Motor neuron (in vitro differentiated cells): ENCODE measurements at regions of chr2 and their contacts with region 1.

Region 1: GRCh38 chr2:73176881-73177644 is 25.3 kb upstream of the NOTO start:
- ATAC-seq: peak; percentile 60 to 95 (median 91)
- H3K4me3 ChIP-seq: peak overlapping the region; percentile 32 to 39 (median 34)
- H3K27ac ChIP-seq: no peak overlapping the region
- H3K4me1 ChIP-seq: peaks cover 3% of the 10 kb centered on the region in 2 donors

Region 2: DNA sequence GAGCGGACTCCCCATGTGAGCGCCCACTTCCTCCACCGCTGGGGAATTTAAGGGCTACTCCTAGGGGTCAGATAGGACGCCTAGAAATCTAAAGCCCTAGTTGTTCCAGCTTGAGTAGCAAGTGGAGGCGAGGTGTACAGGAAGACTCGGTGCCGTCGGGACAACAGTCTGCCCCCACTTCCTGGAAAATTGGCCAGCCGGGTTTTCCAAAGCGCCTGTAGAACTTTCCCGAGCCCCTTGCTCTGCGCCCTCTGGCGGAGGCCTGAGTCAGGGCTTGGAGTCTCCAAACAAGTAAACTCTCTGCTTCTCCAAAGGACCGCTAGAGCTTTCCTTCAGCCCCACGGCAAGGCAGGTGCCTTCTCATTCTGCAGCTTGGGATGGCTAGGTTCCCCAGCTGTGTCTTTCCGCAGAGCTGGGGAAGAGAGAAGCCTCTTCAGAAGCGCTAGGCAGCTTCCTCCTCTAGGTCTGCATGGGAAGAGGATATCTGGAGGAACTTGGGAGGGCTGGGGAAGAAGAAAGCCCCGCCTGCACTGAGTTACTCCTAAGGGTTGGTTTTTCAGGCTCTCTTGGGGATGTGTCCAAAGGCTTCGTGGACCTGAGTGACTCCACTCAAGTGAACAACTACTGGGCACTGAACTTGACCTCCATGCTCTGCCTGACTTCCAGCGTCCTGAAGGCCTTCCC is 289.2 kb before region 1 on chr2:
- in situ Hi-C with region 1: loop called in 7 of 9 experiments (anchors 10 to 25 kb)
- ATAC-seq: peak; percentile 51 to 77 (median 72)
- H3K4me3 ChIP-seq: peak overlapping the region; percentile 32 to 45 (median 39)
- H3K27ac ChIP-seq: no peak overlapping the region
- H3K4me1 ChIP-seq: peaks cover 0 to 4% of the 10 kb centered on the region in 2 donors

Region 3: DNA sequence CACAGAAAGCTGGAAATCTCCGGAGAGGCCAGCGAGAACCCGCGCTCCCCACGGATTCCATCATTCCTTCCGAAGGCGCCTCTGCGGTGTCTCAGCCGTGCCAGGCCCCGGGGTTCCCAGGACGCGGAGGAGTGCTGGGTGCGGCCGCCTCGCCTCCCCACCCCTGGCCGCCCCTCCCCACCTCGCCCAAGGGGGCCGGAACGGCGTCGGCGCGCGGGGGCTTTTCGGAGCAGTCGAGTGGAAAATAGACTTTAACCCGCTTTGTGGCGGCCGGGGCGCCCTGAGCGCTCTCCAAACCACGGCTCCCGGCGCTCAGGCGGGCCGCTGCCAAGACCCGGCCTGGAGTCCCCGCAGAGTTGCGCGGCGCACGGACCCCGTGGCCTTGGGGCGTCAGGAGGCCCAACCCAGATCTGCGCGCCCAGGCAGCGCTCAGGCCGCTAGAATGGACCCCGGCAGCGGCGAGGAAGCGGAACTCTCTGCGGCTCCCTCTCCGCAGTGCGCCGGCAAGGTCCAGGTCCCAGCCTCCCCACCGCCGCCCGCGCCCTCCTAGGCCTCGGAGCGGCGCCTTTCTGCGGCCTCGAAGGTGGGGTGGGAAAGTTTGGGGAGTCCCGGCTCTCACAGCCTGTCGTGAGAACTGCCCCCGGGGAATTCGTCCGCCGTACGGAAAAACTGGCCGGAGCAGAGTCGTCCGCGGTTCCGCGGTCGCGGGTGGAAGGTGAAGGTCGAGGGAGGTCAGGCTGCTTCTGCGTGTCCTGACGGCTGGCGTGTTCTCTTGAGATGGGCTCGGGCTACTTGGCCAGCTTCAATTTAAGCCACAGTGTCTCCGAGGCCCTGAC is 260.9 kb before region 1 on chr2:
- in situ Hi-C with region 1: loop called in 1 of 9 experiments (anchors 25 kb)
- ATAC-seq: peak; percentile 22 to 68 (median 40)
- H3K4me3 ChIP-seq: peak overlapping the region in 4 of 5 donors; percentile 14 to 28 (median 20)
- H3K27ac ChIP-seq: no peak overlapping the region
- H3K4me1 ChIP-seq: peaks cover 12 to 21% of the 10 kb centered on the region in 2 donors

Region 4: DNA sequence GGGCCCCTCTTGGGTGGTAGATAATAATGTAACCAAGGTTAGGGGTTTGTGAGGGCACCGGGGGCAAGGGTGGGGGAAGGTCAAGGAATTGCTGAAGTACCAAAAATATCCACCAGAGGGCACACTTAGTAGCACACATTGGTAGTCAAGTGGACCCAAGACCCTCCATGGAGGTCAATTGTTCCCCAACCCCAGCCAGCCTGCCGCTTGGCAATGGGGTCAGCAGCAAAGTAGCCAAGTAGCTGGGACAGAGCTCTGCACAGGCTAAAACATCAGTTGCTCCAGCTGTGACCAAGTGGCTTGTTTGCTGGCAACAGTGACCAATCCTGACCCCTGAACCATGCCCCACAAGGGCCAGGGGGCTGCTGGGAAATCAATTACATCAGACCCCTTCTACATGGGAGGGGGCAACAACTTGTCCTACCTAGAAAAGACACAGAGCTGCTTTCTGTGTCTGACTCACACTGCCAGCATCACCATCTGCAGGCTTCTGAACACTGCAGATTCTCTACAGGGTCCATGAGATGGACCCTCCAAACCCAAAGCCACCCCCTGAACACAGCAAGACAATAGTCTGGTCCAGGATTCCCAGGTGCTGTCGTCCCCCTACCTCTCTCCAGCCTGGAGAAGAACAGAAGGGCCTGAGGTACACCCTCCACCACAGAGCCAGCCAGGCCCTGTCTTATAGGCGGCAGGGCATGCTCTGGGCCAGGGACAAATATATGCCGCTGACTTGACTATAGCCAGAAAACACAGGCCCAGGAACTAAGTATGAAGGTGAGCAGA is 183.7 kb before region 1 on chr2:
- in situ Hi-C with region 1: loop called in 5 of 9 experiments (anchors 25 kb)
- ATAC-seq: peak in 7 of 8 experiments; percentile 35 to 80 (median 57)
- H3K4me3 ChIP-seq: no peak overlapping the region
- H3K27ac ChIP-seq: no peak overlapping the region
- H3K4me1 ChIP-seq: no peaks in the 10 kb centered on the region

Region 5: GRCh38 chr2:73279852-73280251 is 102.8 kb after region 1 on chr2:
- in situ Hi-C with region 1: no loop called
- ATAC-seq: peak in 1 of 8 experiments; percentile 4
- H3K4me3 ChIP-seq: no peak overlapping the region
- H3K27ac ChIP-seq: no peak overlapping the region
- H3K4me1 ChIP-seq: peaks cover 8 to 10% of the 10 kb centered on the region in 2 donors

Region 6: DNA sequence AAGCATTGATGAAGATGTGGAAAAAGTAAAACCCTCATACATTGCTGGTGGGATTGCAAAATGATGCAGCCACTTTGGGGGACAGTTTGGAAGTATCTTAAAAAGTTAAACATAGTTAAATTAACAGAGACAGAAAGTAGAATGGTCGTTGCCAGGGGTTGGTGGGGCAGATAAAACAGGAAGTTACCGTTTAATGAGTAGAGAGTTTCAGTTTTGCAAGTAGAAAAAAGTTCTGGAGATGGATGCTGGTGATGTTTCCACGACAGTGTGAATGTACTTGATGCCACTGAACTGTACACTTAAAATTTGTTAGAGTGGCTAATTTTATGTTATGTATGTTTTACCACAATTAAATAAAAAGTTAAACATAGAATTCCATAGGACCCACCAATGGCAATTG is 160.8 kb after region 1 on chr2:
- in situ Hi-C with region 1: no loop called
- ATAC-seq: no peak
- H3K4me3 ChIP-seq: no peak overlapping the region
- H3K27ac ChIP-seq: no peak overlapping the region
- H3K4me1 ChIP-seq: no peaks in the 10 kb centered on the region